HEK293 (cell line): ENCODE measurements at regions of chr12 and their contacts with region 1.

Region 1: DNA sequence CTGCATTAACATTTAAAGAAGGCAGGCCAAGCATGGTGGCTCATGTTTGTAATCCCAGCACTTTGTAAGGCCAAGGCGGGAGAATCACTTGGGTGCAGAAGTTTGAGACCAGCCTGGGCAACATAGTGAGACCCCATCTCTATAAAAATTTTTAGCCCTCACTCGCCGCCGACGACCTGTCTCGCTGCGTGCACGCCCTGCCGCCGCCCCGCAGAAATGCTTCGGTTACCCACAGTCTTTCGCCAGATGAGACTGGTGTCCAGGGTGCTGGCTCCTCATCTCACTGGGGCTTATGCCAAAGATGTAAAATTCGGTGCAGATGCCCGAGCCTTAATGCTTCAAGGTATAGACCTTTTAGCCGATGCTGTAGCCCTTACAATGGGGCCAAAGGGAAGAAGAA is 10.8 kb upstream of the RBMS2 start:
- H3K4me3 ChIP-seq: no peak overlapping the region
- H3K27ac ChIP-seq: no peak overlapping the region
- H3K4me1 ChIP-seq: no peaks in the 10 kb centered on the region
- CTCF ChIP-seq: no peak

Region 2: DNA sequence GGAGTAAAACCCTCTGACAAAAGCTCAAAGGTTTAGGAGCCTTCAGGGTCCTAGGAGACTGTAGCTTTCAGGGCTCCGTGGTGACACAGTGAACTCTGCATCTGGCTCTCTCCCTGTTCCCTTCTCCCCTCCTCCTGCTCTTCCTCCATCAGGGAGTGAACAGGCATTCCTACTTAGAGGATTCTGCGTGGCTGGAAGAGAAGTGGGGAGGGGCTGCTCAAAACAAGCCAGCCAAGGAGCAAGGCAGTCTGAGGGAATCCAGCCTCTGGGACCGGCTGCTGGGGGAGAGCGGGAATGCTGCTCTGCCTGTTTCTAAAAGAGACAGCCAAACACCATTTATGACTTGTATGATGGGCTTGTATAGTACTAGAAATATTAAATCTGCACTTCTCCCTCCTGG is 60.3 kb after region 1 on chr12:
- CTCF ChIA-PET with region 1: interaction called, 57 read pairs
- POLR2A ChIA-PET with region 1: no interaction called
- H3K4me3 ChIP-seq: no peak overlapping the region
- H3K27ac ChIP-seq: no peak overlapping the region
- H3K4me1 ChIP-seq: no peaks in the 10 kb centered on the region
- CTCF ChIP-seq: no peak

Region 3: GRCh38 chr12:56593909-56594621 is 83.3 kb after region 1 on chr12:
- CTCF ChIA-PET with region 1: interaction called, 139 read pairs
- POLR2A ChIA-PET with region 1: no interaction called
- H3K4me3 ChIP-seq: no peak overlapping the region
- H3K27ac ChIP-seq: peak overlapping the region; percentile 12; the same call in 1 of the 2 replicates
- H3K4me1 ChIP-seq: no peaks in the 10 kb centered on the region; the same call in 1 of the 2 replicates
- CTCF ChIP-seq: peak; percentile 80

Region 4: GRCh38 chr12:56657416-56658379 is 146.9 kb after region 1 on chr12:
- CTCF ChIA-PET with region 1: no interaction called
- POLR2A ChIA-PET with region 1: no interaction called
- H3K4me3 ChIP-seq: no peak overlapping the region
- H3K27ac ChIP-seq: no peak overlapping the region
- H3K4me1 ChIP-seq: no peaks in the 10 kb centered on the region
- CTCF ChIP-seq: no peak